ENCODE measurements at regions of chr6 and their contacts with region 1.

Region 1: DNA sequence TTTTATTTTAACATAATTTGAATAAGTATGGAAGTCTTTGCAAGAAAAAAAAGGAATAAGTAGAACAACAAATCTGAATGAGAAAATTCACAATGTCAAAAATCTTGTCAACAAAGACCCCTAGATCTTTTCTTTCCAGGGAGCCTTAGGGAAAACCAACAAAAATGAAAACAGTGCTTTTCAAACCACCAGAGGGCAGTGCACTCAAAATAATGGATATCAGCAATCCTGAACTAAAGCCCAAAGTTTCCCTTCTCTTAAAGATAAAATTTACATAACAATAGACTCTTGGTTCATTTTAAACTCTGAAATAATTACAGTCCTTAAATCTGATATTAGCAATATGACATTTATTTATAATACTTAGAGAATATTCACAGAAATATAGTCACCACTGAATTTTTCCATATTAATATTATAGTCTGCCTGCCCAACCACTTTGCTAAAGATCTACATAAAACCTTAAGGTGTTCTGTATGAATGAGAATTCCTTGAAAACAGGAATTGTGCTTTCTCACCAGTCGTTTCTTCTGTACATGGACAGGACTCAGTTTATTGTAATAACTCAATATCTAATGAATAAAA is 105.3 kb upstream of the BMP5 start:
- DNase-seq: peak; percentile 82
- H3K4me3 ChIP-seq: no peak overlapping the region
- H3K27ac ChIP-seq: peak overlapping the region; percentile 48
- H3K4me1 ChIP-seq: peaks cover 25% of the 10 kb centered on the region
- H3K27me3 ChIP-seq: no peaks in the 10 kb centered on the region
- CTCF ChIP-seq: peak; percentile 80

Region 2: DNA sequence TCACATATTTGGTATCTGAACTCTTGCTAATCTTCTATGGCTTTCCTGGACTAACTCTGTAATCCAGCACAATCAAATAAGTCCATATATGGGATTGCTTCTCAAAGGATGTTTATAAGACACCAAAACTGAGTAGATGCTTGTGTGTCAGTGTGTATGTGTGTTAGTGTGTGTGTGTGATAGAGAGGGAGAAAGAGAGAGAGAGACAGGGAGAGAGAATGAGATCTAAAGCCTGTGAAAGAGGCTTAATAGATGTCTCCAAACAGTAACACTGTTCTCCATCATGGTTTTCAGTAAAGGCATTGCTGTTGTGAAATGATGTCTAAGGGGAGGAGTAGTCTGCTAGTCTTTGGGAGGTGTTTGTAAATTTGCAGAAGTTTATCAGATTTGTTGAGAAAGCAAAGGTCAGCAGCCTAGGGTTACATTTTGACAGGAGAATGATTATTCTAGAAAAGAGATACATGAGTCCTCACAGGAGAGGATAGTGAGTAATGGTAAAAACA is 1943.4 kb before region 1 on chr6:
- CTCF ChIA-PET with region 1: no interaction called
- POLR2A ChIA-PET with region 1: interaction called, 16 read pairs
- intact Hi-C with region 1: no loop called
- DNase-seq: no peak
- H3K4me3 ChIP-seq: no peak overlapping the region
- H3K27ac ChIP-seq: no peak overlapping the region
- H3K4me1 ChIP-seq: no peaks in the 10 kb centered on the region
- H3K27me3 ChIP-seq: no peaks in the 10 kb centered on the region
- CTCF ChIP-seq: no peak

Region 3: DNA sequence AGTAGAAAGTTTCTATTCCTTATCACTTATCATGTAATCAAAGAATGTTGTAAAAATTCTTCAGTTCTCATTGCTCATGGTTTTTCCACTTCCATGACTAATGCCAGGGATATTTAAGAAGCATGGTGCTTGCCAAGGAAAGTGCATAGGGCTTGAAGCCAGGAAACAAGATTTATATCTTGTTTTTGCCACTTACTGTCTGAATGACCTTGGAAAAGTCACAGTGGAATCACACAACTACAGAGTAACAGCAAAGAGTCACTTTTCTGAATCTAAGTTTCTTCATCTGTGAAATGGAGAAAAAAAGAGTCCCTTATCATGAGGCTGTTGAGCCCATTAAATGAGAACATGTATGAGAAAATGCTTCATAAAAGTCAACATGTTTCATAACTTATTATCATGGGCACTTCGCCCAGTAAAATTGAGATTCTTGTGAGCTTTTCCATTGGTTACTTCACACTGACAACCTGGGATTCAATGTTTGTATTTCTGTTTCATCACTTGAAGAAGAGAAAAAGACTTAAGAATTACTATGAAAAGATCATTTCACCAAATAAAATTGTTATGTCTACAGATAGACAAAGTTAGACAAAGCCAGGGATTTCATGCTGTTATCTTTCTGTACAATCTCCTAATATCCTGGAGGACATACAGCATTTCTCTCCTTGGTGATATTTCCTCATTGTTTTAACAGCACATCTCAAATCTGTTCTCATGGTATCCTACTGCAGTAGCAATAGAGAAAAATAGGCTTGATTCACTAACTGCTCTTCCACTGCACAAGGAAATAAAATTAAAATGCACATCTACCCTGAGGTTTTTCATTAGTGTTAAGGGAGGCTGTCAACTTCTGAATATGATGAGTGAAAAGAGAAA is 97.8 kb before region 1 on chr6:
- CTCF ChIA-PET with region 1: no interaction called
- POLR2A ChIA-PET with region 1: no interaction called
- intact Hi-C with region 1: no loop called
- DNase-seq: peak; percentile 63
- H3K4me3 ChIP-seq: no peak overlapping the region
- H3K27ac ChIP-seq: no peak overlapping the region
- H3K4me1 ChIP-seq: peaks cover 16% of the 10 kb centered on the region
- H3K27me3 ChIP-seq: no peaks in the 10 kb centered on the region
- CTCF ChIP-seq: no peak

Region 4: GRCh38 chr6:56021943-56022342 is 41.2 kb after region 1 on chr6:
- CTCF ChIA-PET with region 1: no interaction called
- POLR2A ChIA-PET with region 1: no interaction called
- intact Hi-C with region 1: no loop called
- DNase-seq: peak; percentile 81
- H3K4me3 ChIP-seq: no peak overlapping the region
- H3K27ac ChIP-seq: peak overlapping the region; percentile 18
- H3K4me1 ChIP-seq: peaks cover 28% of the 10 kb centered on the region
- H3K27me3 ChIP-seq: no peaks in the 10 kb centered on the region
- CTCF ChIP-seq: peak; percentile 61

Region 5: GRCh38 chr6:56259234-56260077 is 278.7 kb after region 1 on chr6:
- CTCF ChIA-PET with region 1: no interaction called
- POLR2A ChIA-PET with region 1: no interaction called
- intact Hi-C with region 1: loop called (anchors 1 kb)
- DNase-seq: peak; percentile 93
- H3K4me3 ChIP-seq: no peak overlapping the region
- H3K27ac ChIP-seq: peak overlapping the region; percentile 91
- H3K4me1 ChIP-seq: peaks cover 91% of the 10 kb centered on the region
- H3K27me3 ChIP-seq: no peaks in the 10 kb centered on the region
- CTCF ChIP-seq: no peak

Region 6: GRCh38 chr6:57135885-57136284 is 1155.2 kb after region 1 on chr6:
- CTCF ChIA-PET with region 1: no interaction called
- POLR2A ChIA-PET with region 1: no interaction called
- intact Hi-C with region 1: no loop called
- DNase-seq: no peak
- H3K4me3 ChIP-seq: no peak overlapping the region
- H3K27ac ChIP-seq: no peak overlapping the region
- H3K4me1 ChIP-seq: peaks cover 6% of the 10 kb centered on the region
- H3K27me3 ChIP-seq: no peaks in the 10 kb centered on the region
- CTCF ChIP-seq: no peak

Measured in A673 (cell line).